Dendritic cell treated with granulocyte-macrophage colony-stimulating factor and Interleukin-4, amounts not matched to agents 40 ng/mL and 50 ng/mL, for 4 days (primary cell): ENCODE measurements at regions of chr5 and their contacts with region 1.

Region 1: DNA sequence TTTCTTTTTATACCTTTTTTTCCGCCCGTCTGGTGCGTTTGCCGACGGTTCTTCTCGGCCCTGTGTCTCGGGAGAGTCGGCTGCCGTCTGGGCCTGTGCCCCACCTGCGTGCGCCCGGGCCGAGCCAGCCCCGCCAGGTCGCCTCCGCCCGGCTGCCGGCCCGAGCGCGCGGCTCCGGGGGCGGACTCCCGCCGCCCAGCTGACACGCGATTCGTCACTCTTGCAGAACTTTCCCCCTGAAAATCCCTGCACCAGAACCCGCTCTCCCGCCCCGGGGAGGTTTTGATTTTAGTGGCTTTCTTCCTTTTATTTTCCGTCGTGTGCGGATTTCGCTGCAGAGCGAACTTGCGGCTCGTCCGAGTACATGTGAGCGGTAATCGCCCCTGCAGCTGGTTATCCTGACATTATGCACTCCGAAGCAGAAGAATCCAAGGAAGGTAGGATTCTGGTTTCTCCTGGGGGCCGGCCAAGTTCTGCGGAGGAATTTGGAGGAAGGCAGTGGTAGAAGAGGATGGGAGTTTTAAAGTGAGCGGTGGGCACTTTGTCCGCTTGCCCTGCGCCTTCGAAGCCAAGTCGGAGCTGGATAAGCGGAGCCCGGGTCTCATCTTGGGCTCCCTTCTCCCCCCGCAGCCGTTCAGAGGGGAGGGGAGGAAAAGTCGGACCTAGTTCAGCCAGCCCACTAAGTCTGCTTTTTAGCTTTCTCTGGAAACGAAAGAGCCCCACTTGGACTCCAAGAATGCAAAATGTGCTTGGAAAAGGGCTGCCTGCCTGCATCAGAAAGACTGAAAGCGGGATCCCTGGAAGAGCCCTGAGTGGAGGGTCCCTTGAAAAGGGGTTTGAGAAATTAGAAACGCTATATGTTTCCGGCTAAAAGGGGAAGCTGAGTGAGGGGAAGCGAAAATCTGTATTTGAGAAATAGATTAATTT is at the start of gene TNFAIP8:
- H3K4me3 Mint-ChIP-seq: peak within 1 kb of the TSS; percentile 99
- H3K27ac Mint-ChIP-seq: peak within 1 kb of the TSS; percentile 98
- H3K4me1 Mint-ChIP-seq: peaks cover 58% of the 10 kb centered on the region
- H3K27me3 Mint-ChIP-seq: no peaks in the 10 kb centered on the region

Region 2: DNA sequence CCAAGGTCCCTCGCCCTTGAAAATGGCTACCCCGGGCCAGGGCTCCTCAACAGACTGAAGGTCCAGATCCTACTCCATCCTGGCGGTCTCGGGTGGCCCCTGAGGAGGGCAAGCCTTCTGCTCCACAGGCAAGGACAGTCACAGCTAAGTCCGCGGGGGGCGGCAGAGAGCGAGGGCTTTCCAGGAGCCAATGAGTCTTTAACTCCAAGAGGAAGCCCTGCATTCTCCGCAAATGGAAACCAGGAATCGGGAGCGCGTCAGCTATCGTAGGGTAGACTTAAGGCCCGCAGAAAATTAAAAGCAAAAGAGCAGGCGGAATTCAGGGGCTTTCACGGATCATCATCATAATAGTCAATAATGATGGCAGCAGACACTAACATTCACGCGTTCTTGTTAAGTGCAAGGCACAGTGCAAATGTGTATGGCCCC is 88.0 kb before region 1 on chr5:
- intact Hi-C with region 1: loop called (anchors 5 kb)
- H3K4me3 Mint-ChIP-seq: peak overlapping the region; percentile 91
- H3K27ac Mint-ChIP-seq: peak overlapping the region; percentile 94
- H3K4me1 Mint-ChIP-seq: peaks cover 56% of the 10 kb centered on the region
- H3K27me3 Mint-ChIP-seq: no peaks in the 10 kb centered on the region

Region 3: DNA sequence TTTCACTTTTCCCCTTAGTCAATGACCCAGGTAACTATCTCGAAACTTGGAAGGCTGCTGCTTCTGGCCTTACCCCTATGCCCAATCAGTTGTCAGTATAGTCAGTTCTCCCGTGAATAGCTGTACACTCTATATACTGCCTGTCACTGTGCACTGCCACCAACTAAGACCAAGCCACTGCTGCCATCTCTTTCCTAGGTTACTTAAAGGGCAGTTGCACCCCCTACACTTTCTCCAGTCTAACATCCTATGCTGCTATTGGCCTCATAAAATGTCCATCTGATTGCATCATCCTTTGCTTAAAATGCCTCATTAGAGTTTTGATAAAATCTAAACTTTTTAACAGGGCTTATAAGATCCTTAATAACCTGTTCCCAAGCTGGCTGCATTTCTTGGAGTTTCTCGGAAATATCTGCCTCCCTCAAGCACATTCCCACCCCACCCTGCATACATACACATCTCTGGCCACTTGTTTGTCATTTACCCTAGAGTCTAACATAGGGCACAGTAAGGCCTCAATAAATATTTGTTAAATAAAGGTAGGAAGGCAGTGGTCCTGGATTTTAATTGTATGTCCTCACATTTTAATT is 32.9 kb before region 1 on chr5:
- intact Hi-C with region 1: loop called (anchors 5 kb)
- H3K4me3 Mint-ChIP-seq: no peak overlapping the region
- H3K27ac Mint-ChIP-seq: peak overlapping the region; percentile 77
- H3K4me1 Mint-ChIP-seq: peaks cover 80% of the 10 kb centered on the region
- H3K27me3 Mint-ChIP-seq: no peaks in the 10 kb centered on the region

Region 4: DNA sequence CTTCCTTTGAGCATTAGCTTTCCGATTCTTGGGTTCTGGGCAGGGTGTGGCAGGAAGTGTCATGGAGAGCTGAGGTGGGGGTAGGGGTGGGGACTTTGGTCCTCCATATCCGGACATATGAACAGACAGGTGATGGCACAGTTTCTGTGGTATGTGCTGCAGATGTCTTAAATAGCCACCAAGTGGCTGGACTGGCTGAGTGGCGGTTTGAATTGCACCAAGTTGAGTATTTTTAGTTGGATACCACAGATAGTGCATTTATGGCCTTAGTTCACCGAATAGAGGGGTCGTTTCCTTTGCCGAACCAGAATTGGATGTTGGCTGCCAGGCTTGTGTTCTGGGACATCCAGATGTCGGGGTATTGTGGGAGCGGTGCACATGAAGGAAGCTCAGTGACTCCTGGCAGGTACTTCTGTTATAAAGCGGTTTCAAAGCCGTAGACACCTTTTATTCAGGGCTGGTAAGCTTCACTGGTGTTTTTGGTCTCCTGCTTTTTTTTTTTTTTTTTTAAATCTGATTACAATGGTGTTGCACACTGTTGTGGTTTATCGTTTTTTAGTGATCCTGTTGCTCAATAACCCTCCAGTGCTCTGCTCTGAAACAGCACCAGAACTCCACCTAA is 15.2 kb before region 1 on chr5:
- intact Hi-C with region 1: loop called (anchors 1 kb)
- H3K4me3 Mint-ChIP-seq: peak overlapping the region; percentile 44
- H3K27ac Mint-ChIP-seq: peak overlapping the region; percentile 81
- H3K4me1 Mint-ChIP-seq: peaks cover 85% of the 10 kb centered on the region
- H3K27me3 Mint-ChIP-seq: no peaks in the 10 kb centered on the region

Region 5: GRCh38 chr5:119395080-119395836 is 39.3 kb after region 1 on chr5:
- intact Hi-C with region 1: loop called (anchors 2 kb)
- H3K4me3 Mint-ChIP-seq: no peak overlapping the region
- H3K27ac Mint-ChIP-seq: peak overlapping the region; percentile 47
- H3K4me1 Mint-ChIP-seq: peaks cover 59% of the 10 kb centered on the region
- H3K27me3 Mint-ChIP-seq: no peaks in the 10 kb centered on the region